ENCODE measurements at regions of chr2 and their contacts with region 1.

Region 1: DNA sequence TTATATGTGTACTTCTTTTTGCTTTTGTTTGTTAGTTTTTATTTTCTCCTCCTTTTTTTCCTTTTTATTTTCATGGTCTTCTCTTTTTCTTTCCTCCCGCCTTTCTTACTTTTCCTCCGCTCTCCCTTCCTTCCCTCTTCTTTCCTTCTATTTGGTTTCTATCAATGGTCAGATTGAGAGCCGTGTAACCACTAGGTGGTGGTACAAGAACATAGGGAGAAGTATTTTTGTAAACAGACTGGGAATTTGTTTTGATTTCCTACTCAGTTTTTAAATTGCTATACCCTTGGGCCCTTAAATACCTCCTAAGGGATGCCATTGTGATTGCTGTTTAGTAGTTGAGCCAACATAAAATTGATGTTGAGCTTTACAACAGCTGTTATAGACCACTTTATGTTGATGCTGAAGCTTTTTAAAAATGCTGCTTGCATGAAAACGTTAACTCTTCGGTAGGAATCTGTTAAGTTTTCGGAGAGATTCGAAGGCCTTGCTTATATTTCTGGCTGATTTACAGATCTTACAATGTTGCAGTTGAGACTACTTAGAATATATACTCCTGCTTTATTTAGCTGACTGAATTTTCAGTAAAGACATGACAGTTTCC is 124.2 kb downstream of the UBE2E3 start:
- DNase-seq: no peak
- H3K4me3 Mint-ChIP-seq: no peak overlapping the region
- H3K27ac Mint-ChIP-seq: no peak overlapping the region
- H3K4me1 Mint-ChIP-seq: peaks cover 44% of the 10 kb centered on the region
- H3K27me3 Mint-ChIP-seq: no peaks in the 10 kb centered on the region

Region 2: GRCh38 chr2:180901331-180901730 is 203.3 kb before region 1 on chr2:
- CTCF ChIA-PET with region 1: no interaction called
- POLR2A ChIA-PET with region 1: no interaction called
- intact Hi-C with region 1: no loop called
- DNase-seq: no peak
- H3K4me3 Mint-ChIP-seq: no peak overlapping the region
- H3K27ac Mint-ChIP-seq: no peak overlapping the region
- H3K4me1 Mint-ChIP-seq: no peaks in the 10 kb centered on the region
- H3K27me3 Mint-ChIP-seq: peaks cover 10% of the 10 kb centered on the region

Region 3: GRCh38 chr2:181123798-181124231 is 19.2 kb after region 1 on chr2:
- CTCF ChIA-PET with region 1: interaction called, 23 read pairs
- POLR2A ChIA-PET with region 1: interaction called, 4 read pairs
- intact Hi-C with region 1: loop called (anchors 1 kb)
- DNase-seq: peak; percentile 67
- H3K4me3 Mint-ChIP-seq: peak overlapping the region; percentile 74
- H3K27ac Mint-ChIP-seq: peak overlapping the region; percentile 92
- H3K4me1 Mint-ChIP-seq: peaks cover 60% of the 10 kb centered on the region
- H3K27me3 Mint-ChIP-seq: no peaks in the 10 kb centered on the region

Region 4: DNA sequence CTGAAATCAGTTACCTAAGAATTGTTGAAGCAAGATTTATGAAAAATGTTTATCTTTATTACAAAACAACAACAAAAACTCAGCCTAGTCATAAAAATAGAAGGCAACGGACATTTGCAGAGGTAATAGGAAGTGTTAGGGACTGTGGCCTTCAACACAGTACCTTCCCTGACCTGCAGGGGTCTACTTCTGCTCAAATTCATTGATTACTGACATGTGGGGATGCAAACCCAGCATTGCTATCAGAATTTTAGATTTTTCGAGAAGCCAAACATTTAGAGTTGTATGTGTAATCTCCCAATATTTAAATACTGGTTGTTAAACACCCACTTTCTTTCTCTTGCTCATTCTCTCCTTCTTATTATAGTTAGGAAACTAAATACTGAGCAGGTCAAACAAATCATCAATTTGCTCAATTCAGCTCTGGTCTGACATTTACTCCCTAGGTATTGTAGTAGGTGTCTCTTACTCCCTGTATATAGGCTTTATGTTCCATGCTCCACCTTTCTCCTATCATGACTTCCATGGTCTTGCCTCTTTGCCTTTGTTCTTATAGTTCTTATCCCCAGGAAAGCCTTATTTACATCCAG is 74.3 kb after region 1 on chr2:
- CTCF ChIA-PET with region 1: interaction called, 5 read pairs
- POLR2A ChIA-PET with region 1: no interaction called
- intact Hi-C with region 1: loop called (anchors 2 kb)
- DNase-seq: peak; percentile 55
- H3K4me3 Mint-ChIP-seq: no peak overlapping the region
- H3K27ac Mint-ChIP-seq: peak overlapping the region; percentile 73
- H3K4me1 Mint-ChIP-seq: peaks cover 46% of the 10 kb centered on the region
- H3K27me3 Mint-ChIP-seq: no peaks in the 10 kb centered on the region

Region 5: GRCh38 chr2:181281206-181281832 is 176.7 kb after region 1 on chr2:
- CTCF ChIA-PET with region 1: interaction called, 4 read pairs
- POLR2A ChIA-PET with region 1: no interaction called
- intact Hi-C with region 1: loop called (anchors 1 kb)
- DNase-seq: no peak
- H3K4me3 Mint-ChIP-seq: no peak overlapping the region
- H3K27ac Mint-ChIP-seq: peak overlapping the region; percentile 67
- H3K4me1 Mint-ChIP-seq: peaks cover 28% of the 10 kb centered on the region
- H3K27me3 Mint-ChIP-seq: no peaks in the 10 kb centered on the region

Region 6: DNA sequence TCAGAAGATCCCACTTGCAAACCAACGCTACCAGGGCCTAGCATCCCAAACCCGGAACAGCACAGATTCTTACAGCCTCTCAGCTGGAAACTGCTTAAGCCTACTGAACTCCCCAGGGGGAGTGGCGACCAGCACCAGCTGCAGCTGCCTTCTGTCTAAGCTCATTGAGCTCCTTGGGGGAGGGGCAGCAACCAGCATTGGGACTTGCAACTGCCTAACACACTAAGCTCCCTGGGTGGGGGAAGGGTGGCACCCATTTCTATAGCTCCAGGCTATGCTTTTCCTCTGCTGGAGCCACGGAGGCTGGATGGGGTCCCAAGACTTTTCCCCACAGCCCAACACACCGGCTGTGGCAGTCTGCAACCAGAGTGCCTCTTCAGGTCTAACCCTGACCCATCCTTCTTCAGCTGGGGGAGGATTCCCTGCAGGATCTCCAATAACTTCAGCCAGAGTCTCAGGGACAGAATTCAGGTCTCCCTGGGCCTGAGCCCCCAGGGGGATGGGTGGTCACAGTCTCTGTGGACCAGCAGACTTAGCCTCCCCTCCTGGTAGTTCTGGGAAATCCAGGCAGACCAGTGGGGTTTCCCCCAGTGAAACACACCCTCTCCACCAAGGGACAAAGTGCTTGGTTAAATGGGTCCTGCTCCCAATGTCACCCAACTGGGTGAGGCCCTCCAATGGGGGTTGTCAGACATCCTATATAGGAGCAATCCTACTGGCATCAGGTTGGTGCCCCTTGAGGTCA is 306.7 kb after region 1 on chr2:
- CTCF ChIA-PET with region 1: no interaction called
- POLR2A ChIA-PET with region 1: no interaction called
- intact Hi-C with region 1: no loop called
- DNase-seq: no peak
- H3K4me3 Mint-ChIP-seq: no peak overlapping the region
- H3K27ac Mint-ChIP-seq: no peak overlapping the region
- H3K4me1 Mint-ChIP-seq: no peaks in the 10 kb centered on the region
- H3K27me3 Mint-ChIP-seq: no peaks in the 10 kb centered on the region

Region 7: GRCh38 chr2:181457121-181457740 is 352.6 kb after region 1 on chr2 and contains the start of gene ITGA4:
- CTCF ChIA-PET with region 1: interaction called, 41 read pairs
- POLR2A ChIA-PET with region 1: interaction called, 23 read pairs
- intact Hi-C with region 1: loop called (anchors 1 kb)
- DNase-seq: peak; percentile 90
- H3K4me3 Mint-ChIP-seq: peak within 1 kb of the TSS; percentile 88
- H3K27ac Mint-ChIP-seq: peak within 1 kb of the TSS; percentile 97
- H3K4me1 Mint-ChIP-seq: peaks cover 50% of the 10 kb centered on the region
- H3K27me3 Mint-ChIP-seq: no peaks in the 10 kb centered on the region
- total RNA-seq, gene ITGA4: 46.5 to 51.2 TPM

Region 8: GRCh38 chr2:181790716-181791649 is 686.4 kb after region 1 on chr2:
- CTCF ChIA-PET with region 1: no interaction called
- POLR2A ChIA-PET with region 1: no interaction called
- intact Hi-C with region 1: loop called (anchors 2 kb)
- DNase-seq: peak; percentile 52
- H3K4me3 Mint-ChIP-seq: no peak overlapping the region
- H3K27ac Mint-ChIP-seq: peak overlapping the region; percentile 46
- H3K4me1 Mint-ChIP-seq: peaks cover 19% of the 10 kb centered on the region
- H3K27me3 Mint-ChIP-seq: peaks cover 12% of the 10 kb centered on the region

Measured in activated CD4-positive, alpha-beta memory T cell treated with anti-CD3 and anti-CD28 coated beads for 36 hours (primary cell).